Activated CD4-positive, alpha-beta memory T cell treated with anti-CD3 and anti-CD28 coated beads for 36 hours (primary cell): ENCODE measurements at regions of chr10 and their contacts with region 1.

Region 1: DNA sequence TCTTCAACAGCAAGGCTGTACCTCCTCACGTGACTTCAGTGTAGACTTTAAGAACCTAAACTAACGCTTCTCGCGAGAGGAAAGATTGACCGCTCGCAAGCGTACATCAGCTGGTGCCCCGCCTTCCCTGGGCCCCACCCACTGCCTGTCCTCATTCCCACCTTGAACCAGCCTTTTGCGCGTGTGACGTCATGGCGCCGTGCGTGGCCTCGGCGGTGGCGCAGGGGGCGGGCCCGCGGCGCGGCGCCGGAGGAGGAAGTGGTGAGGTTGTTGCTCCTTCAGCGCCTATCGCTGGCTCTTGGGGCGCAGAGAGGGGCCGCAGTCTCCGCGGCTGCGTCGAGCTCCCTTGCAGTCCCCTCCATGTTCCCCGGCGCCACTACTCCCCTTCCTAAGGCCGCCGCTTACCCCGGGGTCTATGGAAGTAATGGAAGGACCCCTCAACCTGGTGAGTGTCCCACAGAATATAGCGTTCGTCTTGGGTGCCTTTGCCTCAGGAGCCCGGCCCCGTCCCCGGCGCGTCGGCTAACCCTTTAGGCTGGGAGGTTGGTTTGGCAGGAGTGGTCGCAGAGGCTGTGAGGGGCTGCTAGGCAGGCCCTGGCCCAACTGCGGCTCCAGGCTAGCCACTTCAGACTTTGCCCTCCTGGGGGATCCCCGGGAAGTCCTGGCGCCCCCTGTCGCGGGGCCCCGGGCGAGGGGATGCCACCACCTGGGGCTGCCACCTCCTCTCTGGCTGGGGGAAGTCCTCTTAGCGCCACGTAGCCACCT is at the start of gene NRBF2:
- DNase-seq: peak; percentile 98
- H3K4me3 Mint-ChIP-seq: peak within 1 kb of the TSS; percentile 89
- H3K27ac Mint-ChIP-seq: peak within 1 kb of the TSS; percentile 91
- H3K4me1 Mint-ChIP-seq: peaks cover 32% of the 10 kb centered on the region
- H3K27me3 Mint-ChIP-seq: peaks cover 3% of the 10 kb centered on the region
- total RNA-seq, gene NRBF2: 21.3 to 21.7 TPM

Region 2: GRCh38 chr10:61903221-61903927 is 1229.9 kb before region 1 on chr10:
- CTCF ChIA-PET with region 1: no interaction called
- POLR2A ChIA-PET with region 1: no interaction called
- intact Hi-C with region 1: loop called (anchors 5 kb)
- DNase-seq: peak; percentile 84
- H3K4me3 Mint-ChIP-seq: peak overlapping the region; percentile 90
- H3K27ac Mint-ChIP-seq: peak overlapping the region; percentile 95
- H3K4me1 Mint-ChIP-seq: peaks cover 45% of the 10 kb centered on the region
- H3K27me3 Mint-ChIP-seq: no peaks in the 10 kb centered on the region

Region 3: GRCh38 chr10:62637249-62638061 is 495.8 kb before region 1 on chr10:
- CTCF ChIA-PET with region 1: no interaction called
- POLR2A ChIA-PET with region 1: no interaction called
- intact Hi-C with region 1: loop called (anchors 5 kb)
- DNase-seq: peak; percentile 84
- H3K4me3 Mint-ChIP-seq: no peak overlapping the region
- H3K27ac Mint-ChIP-seq: no peak overlapping the region
- H3K4me1 Mint-ChIP-seq: peaks cover 26% of the 10 kb centered on the region
- H3K27me3 Mint-ChIP-seq: no peaks in the 10 kb centered on the region

Region 4: GRCh38 chr10:62858364-62858763 is 274.9 kb before region 1 on chr10:
- CTCF ChIA-PET with region 1: no interaction called
- POLR2A ChIA-PET with region 1: interaction called, 3 read pairs
- intact Hi-C with region 1: loop called (anchors 1 kb)
- DNase-seq: no peak
- H3K4me3 Mint-ChIP-seq: no peak overlapping the region
- H3K27ac Mint-ChIP-seq: no peak overlapping the region
- H3K4me1 Mint-ChIP-seq: peaks cover 61% of the 10 kb centered on the region
- H3K27me3 Mint-ChIP-seq: peaks cover 9% of the 10 kb centered on the region

Region 5: DNA sequence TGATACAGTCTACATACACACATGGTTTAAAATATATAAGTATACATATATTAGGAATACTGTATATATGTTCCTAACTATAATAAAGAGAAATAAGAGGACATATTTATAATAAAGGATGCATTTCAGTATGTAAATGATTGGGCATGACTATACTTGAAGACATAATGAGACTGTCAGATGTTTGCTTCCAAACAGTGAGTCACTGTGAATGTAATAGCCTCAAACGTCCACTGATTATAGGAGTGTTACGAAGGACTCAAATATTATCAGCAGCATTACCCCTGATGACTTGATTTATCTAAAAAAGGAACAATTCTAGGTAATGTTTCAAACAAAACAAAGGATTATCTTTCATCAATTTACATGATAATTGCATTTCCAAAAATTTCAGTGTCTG is 40.0 kb before region 1 on chr10:
- CTCF ChIA-PET with region 1: no interaction called
- POLR2A ChIA-PET with region 1: no interaction called
- intact Hi-C with region 1: no loop called
- DNase-seq: no peak
- H3K4me3 Mint-ChIP-seq: no peak overlapping the region
- H3K27ac Mint-ChIP-seq: no peak overlapping the region
- H3K4me1 Mint-ChIP-seq: no peaks in the 10 kb centered on the region
- H3K27me3 Mint-ChIP-seq: peaks cover 6% of the 10 kb centered on the region

Region 6: DNA sequence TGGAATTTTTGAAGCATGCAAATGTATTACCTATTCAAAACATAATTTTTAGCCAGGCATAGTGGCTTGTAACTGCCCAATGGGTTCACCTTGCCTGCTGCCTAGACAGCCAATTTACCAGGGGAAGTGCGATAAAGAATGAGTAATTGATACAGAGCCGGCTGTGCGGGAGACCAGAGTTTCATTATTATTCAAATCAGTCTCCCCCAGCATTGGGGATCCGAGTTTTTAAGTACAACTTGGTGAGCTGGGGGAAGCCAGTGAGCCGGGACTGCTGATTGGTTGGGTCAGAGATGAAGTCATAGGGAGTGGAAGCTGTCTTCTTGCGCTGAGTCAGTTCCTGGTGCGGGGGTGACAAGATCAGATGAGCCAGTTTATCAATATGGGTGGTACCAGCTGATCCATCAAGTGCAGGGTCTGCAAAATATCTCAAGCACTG is 29.2 kb before region 1 on chr10:
- CTCF ChIA-PET with region 1: no interaction called
- POLR2A ChIA-PET with region 1: interaction called, 3 read pairs
- intact Hi-C with region 1: loop called (anchors 1 kb)
- DNase-seq: peak; percentile 80
- H3K4me3 Mint-ChIP-seq: no peak overlapping the region
- H3K27ac Mint-ChIP-seq: no peak overlapping the region
- H3K4me1 Mint-ChIP-seq: peaks cover 13% of the 10 kb centered on the region
- H3K27me3 Mint-ChIP-seq: peaks cover 19% of the 10 kb centered on the region

Region 7: GRCh38 chr10:63157845-63158624 is 24.8 kb after region 1 on chr10:
- CTCF ChIA-PET with region 1: interaction called, 16 read pairs
- POLR2A ChIA-PET with region 1: interaction called, 3 read pairs
- intact Hi-C with region 1: loop called (anchors 1 kb)
- DNase-seq: peak; percentile 41
- H3K4me3 Mint-ChIP-seq: no peak overlapping the region
- H3K27ac Mint-ChIP-seq: no peak overlapping the region
- H3K4me1 Mint-ChIP-seq: peaks cover 7% of the 10 kb centered on the region
- H3K27me3 Mint-ChIP-seq: no peaks in the 10 kb centered on the region

Region 8: DNA sequence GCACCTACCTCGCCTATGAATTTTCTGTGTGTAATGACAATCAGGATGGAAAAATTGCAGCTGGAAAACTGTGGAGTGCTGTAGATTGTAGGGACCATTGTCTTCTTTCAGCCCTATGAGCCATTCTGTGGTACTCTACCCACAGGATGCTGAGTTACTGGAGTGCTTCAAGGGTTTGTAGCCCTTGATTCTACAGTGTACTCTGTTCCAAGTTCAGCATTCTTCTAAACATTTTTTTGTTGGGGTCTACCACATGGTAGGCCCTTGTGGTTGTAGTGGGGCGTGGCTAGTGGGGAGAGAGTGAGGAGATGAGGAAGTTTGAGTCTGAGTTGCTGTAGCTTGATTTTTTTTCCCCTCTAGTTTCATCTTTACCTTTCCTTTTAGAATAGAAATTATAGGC is 421.4 kb after region 1 on chr10:
- CTCF ChIA-PET with region 1: no interaction called
- POLR2A ChIA-PET with region 1: no interaction called
- intact Hi-C with region 1: no loop called
- DNase-seq: peak; percentile 24
- H3K4me3 Mint-ChIP-seq: no peak overlapping the region
- H3K27ac Mint-ChIP-seq: peak overlapping the region; percentile 58
- H3K4me1 Mint-ChIP-seq: peaks cover 31% of the 10 kb centered on the region
- H3K27me3 Mint-ChIP-seq: no peaks in the 10 kb centered on the region

Region 9: GRCh38 chr10:63629363-63630084 is 496.3 kb after region 1 on chr10:
- CTCF ChIA-PET with region 1: interaction called, 3 read pairs
- POLR2A ChIA-PET with region 1: no interaction called
- intact Hi-C with region 1: loop called (anchors 1 kb)
- DNase-seq: peak; percentile 89
- H3K4me3 Mint-ChIP-seq: peak overlapping the region; percentile 90
- H3K27ac Mint-ChIP-seq: peak overlapping the region; percentile 75
- H3K4me1 Mint-ChIP-seq: peaks cover 24% of the 10 kb centered on the region
- H3K27me3 Mint-ChIP-seq: peaks cover 2% of the 10 kb centered on the region